K562 (cell line): ENCODE measurements at regions of chr6 and their contacts with region 1.

Region 1: DNA sequence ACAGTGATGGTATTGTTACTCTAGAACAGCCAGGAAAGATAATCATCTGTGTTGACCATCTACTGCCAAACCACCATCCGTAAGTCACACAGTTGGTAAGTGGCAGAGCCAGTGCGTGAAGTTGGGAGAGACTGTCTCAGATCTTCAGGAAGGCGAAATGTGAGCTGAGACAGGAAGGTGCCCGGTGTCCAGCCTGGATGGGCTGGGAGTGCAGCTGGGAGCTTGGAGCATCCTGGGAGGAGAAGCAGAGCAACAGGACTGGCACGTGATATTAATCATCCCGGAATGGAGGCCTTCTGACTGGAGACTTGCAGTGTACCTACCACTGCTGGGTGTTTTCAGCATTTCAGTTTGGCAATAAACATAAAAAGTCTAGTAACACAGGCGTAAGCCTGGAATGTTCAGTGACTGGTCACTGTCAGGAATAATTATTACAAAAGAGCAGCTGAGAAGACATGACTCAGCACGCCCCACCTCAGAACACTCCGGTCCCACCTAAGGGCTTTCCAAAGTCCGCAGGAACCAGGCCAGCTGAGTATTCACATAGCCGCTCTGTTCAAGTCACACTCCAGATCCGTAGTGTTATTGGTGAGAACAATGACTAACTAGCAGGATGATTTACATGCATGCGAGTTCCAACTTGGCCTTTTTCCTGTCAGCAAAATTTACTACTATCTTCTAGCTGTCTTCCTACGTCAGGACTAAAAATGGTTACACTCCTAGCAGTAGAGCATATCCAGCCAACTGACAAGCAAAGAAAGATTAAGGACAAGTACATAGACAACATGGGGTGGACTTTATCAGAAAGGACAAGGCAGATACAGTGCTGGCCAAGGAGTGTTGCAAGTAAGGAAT is 45.1 kb upstream of the PNRC1 start:
- DNase-seq: peak; percentile 18 to 70 (median 40)
- ATAC-seq: peak; percentile 90
- H3K4me3 ChIP-seq: no peak overlapping the region
- H3K27ac ChIP-seq: peak overlapping the region; percentile 62
- H3K4me1 ChIP-seq: peaks cover 4 to 15% of the 10 kb centered on the region in 2 experiments; a peak in 3 of 5 replicates
- H3K27me3 ChIP-seq: no peaks in the 10 kb centered on the region
- CTCF ChIP-seq: no peak
- EP300 ChIP-seq: peak; percentile 67
- POLR2A ChIP-seq: no peak
- RAD21 ChIP-seq: 0 out of 4 replicates have a peak, but pooled peaks of 1 of the 2 experiments have one; percentile 27

Region 2: DNA sequence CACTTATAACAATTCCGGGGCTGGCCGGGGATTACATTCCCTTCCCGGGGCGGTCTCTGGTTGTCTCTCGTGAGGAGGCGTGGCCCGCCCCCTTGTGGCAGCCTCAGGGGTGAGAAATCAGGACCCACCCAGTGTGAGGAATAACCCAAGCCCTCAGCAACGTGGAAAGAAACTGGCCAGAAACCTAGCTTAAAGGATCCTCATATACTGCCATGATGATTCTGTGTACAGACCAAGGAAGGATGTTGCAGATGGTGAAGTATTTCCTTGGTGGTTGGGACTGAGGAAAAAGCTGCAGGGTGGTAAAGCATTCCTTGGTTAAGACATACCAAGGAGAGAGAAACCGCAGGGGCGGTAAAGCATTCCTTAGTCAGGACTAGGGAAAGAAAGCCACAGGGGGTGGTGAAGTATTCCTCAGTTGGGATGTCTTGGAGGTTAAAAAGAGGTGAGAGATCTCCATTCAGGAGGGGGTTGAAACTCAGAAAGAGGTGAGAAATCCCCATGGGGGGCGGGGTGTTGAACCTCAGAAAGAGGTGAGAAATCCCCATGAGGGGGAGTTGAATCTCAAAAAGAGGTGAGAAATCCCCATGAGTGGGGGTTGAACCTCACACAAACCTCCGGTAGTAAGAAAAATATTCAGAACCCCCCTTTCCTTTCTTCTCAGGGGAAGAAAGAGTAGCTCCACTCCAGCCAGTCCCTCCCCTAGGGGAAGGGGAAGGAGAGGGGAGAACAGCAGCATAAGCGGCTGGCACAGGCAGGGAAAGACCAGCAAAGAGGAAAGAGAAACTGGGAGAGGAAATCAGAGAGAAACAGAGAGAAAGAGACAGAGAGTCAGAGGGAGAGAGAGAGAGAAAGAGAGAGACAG is 310.1 kb before region 1 on chr6:
- CTCF ChIA-PET with region 1: no interaction called
- POLR2A ChIA-PET with region 1: no interaction called
- in situ Hi-C with region 1: no loop called
- intact Hi-C with region 1: no loop called
- DNase-seq: peak in 1 of 4 experiments; percentile 19
- ATAC-seq: peak; percentile 47; the same call in 2 of the 3 replicates
- H3K4me3 ChIP-seq: no peak overlapping the region
- H3K27ac ChIP-seq: no peak overlapping the region
- H3K4me1 ChIP-seq: no peaks in the 10 kb centered on the region
- H3K27me3 ChIP-seq: no peaks in the 10 kb centered on the region
- CTCF ChIP-seq: peak in 2 of 3 experiments; percentile 13 to 24; a peak in 3 of 6 replicates
- EP300 ChIP-seq: no peak
- POLR2A ChIP-seq: no peak
- RAD21 ChIP-seq: no peak

Region 3: DNA sequence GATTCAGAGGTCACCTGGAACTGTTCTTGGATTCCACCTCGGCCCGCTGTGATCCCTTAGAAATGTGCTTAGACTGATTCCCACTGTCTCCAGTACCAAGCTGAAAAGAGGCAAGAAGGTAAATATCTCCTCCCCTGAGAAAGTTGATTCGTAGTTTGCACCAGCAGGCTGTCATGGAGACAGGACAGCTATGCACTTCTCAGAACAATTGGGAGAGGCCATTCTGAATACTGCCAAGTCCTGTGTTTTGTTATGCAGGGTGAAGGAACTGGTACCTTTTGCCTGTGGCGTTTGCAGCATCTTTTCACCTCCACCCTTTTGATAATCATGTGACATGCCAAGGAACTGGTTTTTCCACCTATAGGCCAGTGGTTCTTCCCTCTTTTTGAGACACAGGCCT is 13.8 kb before region 1 on chr6:
- CTCF ChIA-PET with region 1: no interaction called
- POLR2A ChIA-PET with region 1: no interaction called
- in situ Hi-C with region 1: no loop called
- intact Hi-C with region 1: no loop called
- DNase-seq: no peak
- ATAC-seq: no peak
- H3K4me3 ChIP-seq: no peak overlapping the region
- H3K27ac ChIP-seq: no peak overlapping the region
- H3K4me1 ChIP-seq: no peaks in the 10 kb centered on the region; a peak in 1 of 5 replicates
- H3K27me3 ChIP-seq: peaks cover 8 to 17% of the 10 kb centered on the region in 2 experiments; a peak in 4 of 5 replicates
- CTCF ChIP-seq: no peak
- EP300 ChIP-seq: no peak
- POLR2A ChIP-seq: no peak
- RAD21 ChIP-seq: no peak

Region 4: DNA sequence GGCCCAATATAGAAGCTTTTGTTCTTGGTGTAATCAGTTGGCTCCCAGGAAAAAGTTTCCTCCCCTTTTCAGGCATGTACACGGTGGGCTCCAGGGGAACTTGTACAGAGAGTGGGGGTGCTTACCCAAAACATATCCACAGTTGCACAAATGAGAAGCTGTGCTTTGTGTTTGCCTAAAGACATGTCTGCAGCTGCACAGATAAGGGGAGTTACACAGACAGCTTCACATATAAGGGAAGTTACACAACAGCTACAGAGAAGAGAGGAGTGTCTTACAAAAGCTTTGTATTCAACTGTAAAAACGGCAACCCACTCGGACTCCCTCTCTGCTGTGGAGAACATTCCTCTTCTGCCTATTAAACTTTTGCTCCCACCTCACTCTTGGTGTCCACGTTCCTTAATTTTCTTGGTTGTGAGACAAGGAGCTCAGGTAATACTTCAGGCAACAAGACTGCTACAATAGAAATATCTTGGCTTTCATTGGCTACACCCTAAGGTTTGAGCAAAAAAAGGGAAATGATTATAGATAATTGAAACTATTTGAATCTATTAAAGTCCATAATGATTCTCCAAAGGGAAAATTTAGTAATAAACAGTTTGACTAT is 37.6 kb after region 1 on chr6:
- CTCF ChIA-PET with region 1: no interaction called
- POLR2A ChIA-PET with region 1: interaction called, 3 read pairs
- in situ Hi-C with region 1: no loop called
- intact Hi-C with region 1: loop called (anchors 2 kb)
- DNase-seq: peak in 2 of 4 experiments; percentile 51 to 78
- ATAC-seq: peak; percentile 92
- H3K4me3 ChIP-seq: no peak overlapping the region
- H3K27ac ChIP-seq: peak overlapping the region; percentile 74; the same call in 2 of the 3 replicates
- H3K4me1 ChIP-seq: peaks cover 0 to 18% of the 10 kb centered on the region in 2 experiments; a peak in 3 of 5 replicates
- H3K27me3 ChIP-seq: no peaks in the 10 kb centered on the region
- CTCF ChIP-seq: no peak
- EP300 ChIP-seq: peak; percentile 81
- POLR2A ChIP-seq: no peak
- RAD21 ChIP-seq: peak; percentile 23 to 26; a peak in 2 of 4 replicates